Activated CD4-positive, alpha-beta T cell treated with anti-CD3 and anti-CD28 coated beads for 36 hours (primary cell): ENCODE measurements at regions of chr3 and their contacts with region 1.

Region 1: GRCh38 chr3:120795017-120795648 is 52.6 kb downstream of the GTF2E1 start:
- DNase-seq: peak; percentile 92
- ATAC-seq: peak; percentile 99
- H3K4me3 Mint-ChIP-seq: no peak overlapping the region
- H3K27ac Mint-ChIP-seq: no peak overlapping the region
- H3K4me1 Mint-ChIP-seq: peaks cover 10% of the 10 kb centered on the region
- H3K27me3 Mint-ChIP-seq: no peaks in the 10 kb centered on the region

Region 2: GRCh38 chr3:120239644-120240043 is 555.5 kb before region 1 on chr3:
- CTCF ChIA-PET with region 1: interaction called, 3 read pairs
- POLR2A ChIA-PET with region 1: no interaction called
- intact Hi-C with region 1: loop called (anchors 5 to 10 kb)
- DNase-seq: no peak
- ATAC-seq: no peak
- H3K4me3 Mint-ChIP-seq: no peak overlapping the region
- H3K27ac Mint-ChIP-seq: no peak overlapping the region
- H3K4me1 Mint-ChIP-seq: no peaks in the 10 kb centered on the region
- H3K27me3 Mint-ChIP-seq: peaks cover 30% of the 10 kb centered on the region

Region 3: DNA sequence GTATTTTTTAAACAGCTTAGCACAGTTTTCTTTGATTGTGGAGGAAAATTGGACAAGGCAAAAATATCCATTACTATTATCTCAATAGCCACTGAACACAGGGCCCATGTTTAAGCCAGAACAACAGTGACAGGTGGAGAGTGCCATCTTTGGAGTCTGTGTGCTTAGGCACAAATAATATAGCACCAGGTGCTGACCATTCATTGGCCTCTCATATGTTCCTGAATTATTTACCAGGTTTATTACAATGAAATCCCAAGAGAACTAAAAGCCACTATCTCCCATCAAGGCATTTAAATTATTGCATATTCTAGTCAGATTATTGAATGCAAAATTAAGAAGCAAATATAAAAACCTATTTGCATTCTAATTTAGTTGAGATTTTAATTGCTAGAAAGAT is 549.7 kb before region 1 on chr3:
- CTCF ChIA-PET with region 1: interaction called, 3 read pairs
- POLR2A ChIA-PET with region 1: no interaction called
- intact Hi-C with region 1: loop called (anchors 5 to 10 kb)
- DNase-seq: no peak
- ATAC-seq: no peak
- H3K4me3 Mint-ChIP-seq: no peak overlapping the region
- H3K27ac Mint-ChIP-seq: no peak overlapping the region
- H3K4me1 Mint-ChIP-seq: no peaks in the 10 kb centered on the region
- H3K27me3 Mint-ChIP-seq: peaks cover 12% of the 10 kb centered on the region

Region 4: DNA sequence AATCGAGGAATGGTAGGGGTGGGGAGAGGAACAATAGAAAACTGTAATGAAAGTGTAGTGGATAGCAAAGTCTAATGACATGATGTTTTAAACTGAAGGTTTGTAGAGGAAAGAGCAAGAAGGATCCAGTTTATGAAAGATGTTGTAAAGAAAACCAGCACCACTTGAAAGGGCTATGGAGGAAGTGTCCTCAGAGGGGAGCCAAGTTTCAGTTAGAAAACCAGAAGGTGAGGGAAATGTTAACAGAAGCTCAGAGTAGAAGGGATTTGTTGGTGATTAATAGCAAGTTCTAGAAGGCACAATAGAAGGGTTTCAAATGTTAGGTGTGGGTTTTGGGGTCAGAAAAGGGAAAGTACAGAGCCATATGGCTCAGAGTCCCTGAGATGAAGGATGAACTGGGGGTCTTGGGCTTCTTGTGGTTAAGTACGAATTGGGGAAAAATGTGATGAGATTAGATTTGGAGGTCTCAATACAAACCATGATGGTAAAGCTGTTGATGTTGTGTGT is 412.1 kb before region 1 on chr3:
- CTCF ChIA-PET with region 1: no interaction called
- POLR2A ChIA-PET with region 1: no interaction called
- intact Hi-C with region 1: no loop called
- DNase-seq: no peak
- ATAC-seq: no peak
- H3K4me3 Mint-ChIP-seq: no peak overlapping the region
- H3K27ac Mint-ChIP-seq: no peak overlapping the region
- H3K4me1 Mint-ChIP-seq: no peaks in the 10 kb centered on the region
- H3K27me3 Mint-ChIP-seq: peaks cover 6% of the 10 kb centered on the region

Region 5: DNA sequence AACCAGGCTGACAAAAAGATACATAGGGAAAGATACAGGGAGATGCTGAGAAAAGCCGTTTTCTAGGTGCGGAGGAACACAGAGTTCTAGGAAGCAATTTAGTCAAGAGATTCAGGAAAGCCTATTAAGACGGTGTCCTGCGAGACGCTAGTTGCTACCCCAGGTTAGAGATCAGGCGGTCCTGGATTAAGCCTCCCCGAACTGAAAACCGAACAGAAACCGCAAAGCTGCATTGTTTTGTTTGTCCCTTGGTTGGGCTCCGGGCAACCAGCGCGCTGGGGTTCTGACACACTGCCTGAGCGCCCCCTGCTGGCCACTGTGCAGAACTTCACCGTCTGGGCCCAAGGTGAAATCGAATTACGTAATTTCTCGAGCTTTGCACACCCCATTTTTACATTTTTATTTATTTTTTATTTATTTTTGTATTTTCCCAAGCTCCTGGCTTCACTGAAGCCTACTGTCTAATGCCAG is 236.3 kb before region 1 on chr3:
- CTCF ChIA-PET with region 1: interaction called, 45 read pairs
- POLR2A ChIA-PET with region 1: no interaction called
- intact Hi-C with region 1: loop called (anchors 1 kb)
- DNase-seq: peak; percentile 93
- ATAC-seq: peak; percentile 68
- H3K4me3 Mint-ChIP-seq: peak overlapping the region; percentile 56
- H3K27ac Mint-ChIP-seq: peak overlapping the region; percentile 10
- H3K4me1 Mint-ChIP-seq: peaks cover 12% of the 10 kb centered on the region
- H3K27me3 Mint-ChIP-seq: peaks cover 6% of the 10 kb centered on the region

Region 6: DNA sequence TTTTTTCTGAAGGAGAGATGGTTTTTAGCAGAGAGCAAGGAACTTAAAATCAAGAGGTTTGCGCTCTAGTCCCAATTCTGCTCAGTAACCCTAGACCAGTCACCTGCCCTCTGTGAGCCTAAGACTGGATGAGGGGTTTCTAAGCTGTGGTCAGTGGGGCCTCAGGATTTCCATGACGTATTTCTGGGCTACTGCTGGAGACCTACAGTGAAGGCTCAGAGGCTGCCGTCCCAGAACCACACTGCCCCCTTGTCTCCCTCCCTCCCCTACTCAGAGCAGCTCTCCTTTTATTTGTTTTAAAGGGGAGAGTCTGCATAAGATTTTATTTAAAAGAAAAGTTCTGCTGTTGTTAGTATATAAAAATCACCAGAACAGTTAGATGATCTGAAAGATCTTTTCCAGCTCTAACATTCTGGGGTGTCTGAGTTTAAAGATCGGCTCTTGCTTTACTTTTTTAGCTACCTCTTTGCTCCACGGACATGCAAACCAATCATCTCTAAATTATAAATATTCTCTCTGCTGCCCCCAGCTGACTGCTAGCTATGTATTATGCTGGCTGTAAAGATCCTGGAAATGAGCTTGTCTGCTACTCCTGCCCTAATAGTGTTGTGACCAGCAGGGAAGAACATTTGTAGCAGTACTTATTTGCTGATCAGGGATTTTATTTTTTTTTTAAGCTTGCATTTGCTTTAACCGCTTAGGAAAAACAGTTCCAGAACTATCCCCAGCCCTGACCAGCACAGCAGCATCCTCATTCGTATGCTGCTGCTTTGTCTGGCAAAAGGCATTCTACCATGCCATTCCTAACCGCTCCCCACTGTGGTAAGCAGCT is 227.5 kb before region 1 on chr3:
- CTCF ChIA-PET with region 1: interaction called, 21 read pairs
- POLR2A ChIA-PET with region 1: no interaction called
- intact Hi-C with region 1: no loop called
- DNase-seq: no peak
- ATAC-seq: peak; percentile 33
- H3K4me3 Mint-ChIP-seq: no peak overlapping the region
- H3K27ac Mint-ChIP-seq: no peak overlapping the region
- H3K4me1 Mint-ChIP-seq: peaks cover 3% of the 10 kb centered on the region
- H3K27me3 Mint-ChIP-seq: peaks cover 3% of the 10 kb centered on the region

Region 7: GRCh38 chr3:120742198-120742849 is 52.8 kb before region 1 on chr3 and contains the starts of genes GTF2E1 and RABL3:
- CTCF ChIA-PET with region 1: interaction called, 3 read pairs
- POLR2A ChIA-PET with region 1: no interaction called
- intact Hi-C with region 1: loop called in 1 of 2 experiments (anchors 1 kb)
- DNase-seq: peak; percentile 96
- ATAC-seq: peak; percentile 99
- H3K4me3 Mint-ChIP-seq: peak within 1 kb of the TSS; percentile 98
- H3K27ac Mint-ChIP-seq: peak within 1 kb of the TSS; percentile 95
- H3K4me1 Mint-ChIP-seq: peaks cover 28% of the 10 kb centered on the region
- H3K27me3 Mint-ChIP-seq: no peaks in the 10 kb centered on the region
- total RNA-seq, gene GTF2E1: 26.1 to 27.0 TPM
- total RNA-seq, gene RABL3: 35.5 to 37.8 TPM

Region 8: GRCh38 chr3:120756061-120756460 is 39.1 kb before region 1 on chr3:
- CTCF ChIA-PET with region 1: no interaction called
- POLR2A ChIA-PET with region 1: no interaction called
- intact Hi-C with region 1: no loop called
- DNase-seq: no peak
- ATAC-seq: no peak
- H3K4me3 Mint-ChIP-seq: no peak overlapping the region
- H3K27ac Mint-ChIP-seq: no peak overlapping the region
- H3K4me1 Mint-ChIP-seq: peaks cover 33% of the 10 kb centered on the region
- H3K27me3 Mint-ChIP-seq: no peaks in the 10 kb centered on the region